ENCODE measurements at regions of chr11 and their contacts with region 1.

Region 1: DNA sequence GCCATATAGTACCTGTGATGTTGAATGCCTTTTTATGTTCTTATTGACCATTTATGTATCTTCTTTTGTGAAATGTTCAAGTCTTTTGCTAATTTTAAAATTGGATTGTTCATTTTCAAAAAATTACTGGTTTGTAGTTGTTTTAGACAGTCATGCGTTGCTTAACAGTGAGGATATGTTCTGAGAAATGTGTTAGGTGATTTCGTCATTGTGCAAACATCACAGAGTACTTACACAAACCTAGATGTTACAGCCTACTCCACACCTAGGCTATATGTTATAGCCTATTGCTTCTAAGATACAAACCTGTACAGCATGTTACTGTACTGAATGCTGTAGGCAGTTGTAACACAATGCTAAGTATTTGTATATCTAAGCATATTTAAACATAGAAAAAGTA is 32.5 kb downstream of the PDE3B start:
- DNase-seq: no peak
- ATAC-seq: no peak
- H3K4me3 ChIP-seq: no peak overlapping the region
- H3K4me3 Mint-ChIP-seq: no peak overlapping the region
- H3K27ac ChIP-seq: no peak overlapping the region
- H3K27ac Mint-ChIP-seq: no peak overlapping the region
- H3K4me1 ChIP-seq: peaks cover 17% of the 10 kb centered on the region
- H3K4me1 Mint-ChIP-seq: peaks cover 76% of the 10 kb centered on the region
- H3K27me3 ChIP-seq: no peaks in the 10 kb centered on the region
- H3K27me3 Mint-ChIP-seq: no peaks in the 10 kb centered on the region
- CTCF ChIP-seq: no peak

Region 2: GRCh38 chr11:14308114-14308896 is 367.8 kb before region 1 on chr11:
- CTCF ChIA-PET with region 1: no interaction called
- POLR2A ChIA-PET with region 1: no interaction called
- intact Hi-C with region 1: no loop called
- DNase-seq: peak in 2 of 9 experiments; percentile 53 to 67
- ATAC-seq: peak; percentile 84
- H3K4me3 ChIP-seq: no peak overlapping the region
- H3K4me3 Mint-ChIP-seq: no peak overlapping the region
- H3K27ac ChIP-seq: peak overlapping the region in 1 of 2 experiments; percentile 23
- H3K27ac Mint-ChIP-seq: no peak overlapping the region
- H3K4me1 ChIP-seq: peaks cover 6% of the 10 kb centered on the region
- H3K4me1 Mint-ChIP-seq: peaks cover 31% of the 10 kb centered on the region
- H3K27me3 ChIP-seq: no peaks in the 10 kb centered on the region
- H3K27me3 Mint-ChIP-seq: no peaks in the 10 kb centered on the region
- CTCF ChIP-seq: peak; percentile 59

Region 3: GRCh38 chr11:14722496-14722895 is 46.4 kb after region 1 on chr11:
- CTCF ChIA-PET with region 1: no interaction called
- POLR2A ChIA-PET with region 1: no interaction called
- intact Hi-C with region 1: loop called in 1 of 2 experiments (anchors 5 kb)
- DNase-seq: no peak
- ATAC-seq: no peak
- H3K4me3 ChIP-seq: no peak overlapping the region
- H3K4me3 Mint-ChIP-seq: no peak overlapping the region
- H3K27ac ChIP-seq: no peak overlapping the region
- H3K27ac Mint-ChIP-seq: no peak overlapping the region
- H3K4me1 ChIP-seq: peaks cover 20% of the 10 kb centered on the region
- H3K4me1 Mint-ChIP-seq: peaks cover 43% of the 10 kb centered on the region
- H3K27me3 ChIP-seq: no peaks in the 10 kb centered on the region
- H3K27me3 Mint-ChIP-seq: no peaks in the 10 kb centered on the region
- CTCF ChIP-seq: no peak